ENCODE measurements at regions of chr9 and their contacts with region 1.

Region 1: DNA sequence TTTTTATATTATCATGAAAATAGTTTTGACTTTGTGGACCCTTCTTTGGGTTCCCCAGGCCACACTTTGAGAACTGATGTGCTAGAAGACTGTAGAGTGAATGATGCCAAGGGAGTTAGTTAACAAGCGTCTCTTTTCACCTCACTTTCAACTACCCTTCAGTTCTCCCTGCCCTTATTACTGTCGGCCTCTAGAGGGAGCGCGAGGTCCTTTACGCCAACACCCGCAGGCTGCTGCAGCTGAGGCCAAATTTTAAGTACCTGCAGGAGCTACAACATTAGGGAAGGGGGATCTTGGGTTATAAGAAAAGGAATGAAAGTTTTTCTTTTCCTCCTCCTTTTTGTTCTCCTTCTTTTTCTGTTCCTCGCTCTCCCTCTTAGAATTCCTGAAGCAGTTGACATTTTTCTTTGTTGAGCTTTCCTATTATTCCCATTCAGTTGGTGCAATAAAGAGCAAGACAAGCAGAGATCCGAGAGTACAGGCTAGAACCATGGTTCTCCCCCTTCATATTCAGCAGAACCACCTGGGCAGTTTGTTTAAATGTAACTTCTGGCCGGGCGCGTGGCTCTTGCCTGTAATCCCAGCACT is 84.0 kb downstream of the ZFAND5 start:
- DNase-seq: peak; percentile 73
- H3K4me3 Mint-ChIP-seq: no peak overlapping the region
- H3K27ac Mint-ChIP-seq: no peak overlapping the region
- H3K4me1 Mint-ChIP-seq: no peaks in the 10 kb centered on the region
- H3K27me3 Mint-ChIP-seq: no peaks in the 10 kb centered on the region
- CTCF ChIP-seq: peak; percentile 93

Region 2: DNA sequence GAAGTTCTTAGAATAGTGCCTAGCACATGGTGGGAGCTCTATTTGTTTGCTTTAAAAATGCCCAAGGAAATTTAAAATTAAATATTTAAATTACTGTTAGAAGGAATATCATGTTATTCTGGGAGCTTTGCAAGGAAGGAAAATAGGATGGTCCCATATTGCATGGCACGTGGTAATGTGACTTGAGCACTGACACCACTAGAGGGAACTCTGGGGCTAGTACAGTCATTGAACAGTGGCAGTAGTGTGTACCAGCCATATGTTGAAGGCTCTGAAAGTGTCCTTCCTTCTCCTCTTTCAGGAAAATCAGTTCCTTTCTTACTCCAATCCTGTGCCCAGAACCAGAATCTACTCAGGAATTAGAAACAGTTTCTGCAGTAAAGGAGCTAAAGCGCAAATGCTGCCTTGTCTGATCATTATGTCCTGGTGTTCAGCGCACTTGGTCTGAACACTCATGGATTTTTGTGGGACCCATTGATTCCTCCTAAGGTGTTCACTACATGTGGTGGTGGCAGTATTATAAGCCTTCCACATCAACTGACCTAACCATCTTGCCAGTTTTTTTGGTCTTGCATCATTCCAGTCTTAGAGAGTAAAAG is 77.7 kb before region 1 on chr9:
- CTCF ChIA-PET with region 1: interaction called, 23 read pairs
- POLR2A ChIA-PET with region 1: no interaction called
- intact Hi-C with region 1: no loop called
- DNase-seq: peak; percentile 73
- H3K4me3 Mint-ChIP-seq: no peak overlapping the region
- H3K27ac Mint-ChIP-seq: no peak overlapping the region
- H3K4me1 Mint-ChIP-seq: no peaks in the 10 kb centered on the region
- H3K27me3 Mint-ChIP-seq: peaks cover 20% of the 10 kb centered on the region
- CTCF ChIP-seq: peak; percentile 58

Region 3: GRCh38 chr9:72592502-72593403 is 311.7 kb after region 1 on chr9:
- CTCF ChIA-PET with region 1: interaction called, 61 read pairs
- POLR2A ChIA-PET with region 1: interaction called, 3 read pairs
- intact Hi-C with region 1: loop called (anchors 1 kb)
- DNase-seq: peak; percentile 66
- H3K4me3 Mint-ChIP-seq: no peak overlapping the region
- H3K27ac Mint-ChIP-seq: no peak overlapping the region
- H3K4me1 Mint-ChIP-seq: peaks cover 15% of the 10 kb centered on the region
- H3K27me3 Mint-ChIP-seq: no peaks in the 10 kb centered on the region
- CTCF ChIP-seq: peak; percentile 64

Region 4: DNA sequence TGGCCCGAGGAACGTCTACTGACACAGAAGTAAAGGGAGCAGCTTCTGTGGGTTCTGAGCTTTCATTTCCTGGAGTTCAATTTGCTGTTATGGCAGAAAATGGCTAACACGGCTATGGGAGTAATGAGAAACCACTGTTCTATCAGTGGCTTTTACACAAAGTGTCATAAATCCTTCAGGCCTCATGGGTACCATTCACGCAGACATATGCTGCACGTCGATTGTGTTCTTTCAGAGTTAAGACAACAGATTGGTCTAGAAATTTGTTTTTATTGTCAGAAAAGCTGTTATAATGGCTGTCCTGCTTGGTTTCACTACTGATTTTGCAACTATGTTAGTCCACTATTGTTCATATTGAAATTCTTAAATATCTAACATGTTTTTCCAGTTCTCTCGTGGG is 536.4 kb after region 1 on chr9:
- CTCF ChIA-PET with region 1: interaction called, 240 read pairs
- POLR2A ChIA-PET with region 1: interaction called, 7 read pairs
- intact Hi-C with region 1: loop called (anchors 1 kb)
- DNase-seq: no peak
- H3K4me3 Mint-ChIP-seq: no peak overlapping the region
- H3K27ac Mint-ChIP-seq: no peak overlapping the region
- H3K4me1 Mint-ChIP-seq: no peaks in the 10 kb centered on the region
- H3K27me3 Mint-ChIP-seq: peaks cover 12% of the 10 kb centered on the region
- CTCF ChIP-seq: no peak

Region 5: DNA sequence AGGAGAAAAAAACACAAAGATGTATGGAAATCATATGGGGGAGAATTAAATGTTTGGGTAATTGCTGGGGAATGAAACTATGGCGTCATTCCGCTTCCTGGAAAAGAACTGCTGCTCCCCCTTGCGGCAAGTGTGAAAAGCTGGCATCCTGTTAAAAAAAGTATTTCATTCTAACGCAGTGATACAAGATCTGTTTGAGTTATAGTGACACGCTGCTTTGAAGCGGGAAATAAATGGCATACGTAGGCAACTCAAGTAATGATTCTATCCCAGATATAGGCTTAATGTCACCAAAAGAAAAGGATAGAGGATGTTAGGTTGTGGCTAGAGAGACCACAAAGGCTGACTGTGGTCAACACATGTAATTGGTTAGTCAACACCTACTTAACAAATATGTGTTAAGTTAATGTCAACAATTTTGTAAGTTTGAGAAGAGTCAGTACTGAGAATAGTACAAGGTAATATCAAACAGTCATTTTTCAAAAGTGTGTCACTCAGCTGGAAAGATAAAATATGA is 742.1 kb after region 1 on chr9:
- CTCF ChIA-PET with region 1: interaction called, 5 read pairs
- POLR2A ChIA-PET with region 1: no interaction called
- intact Hi-C with region 1: loop called (anchors 5 kb)
- DNase-seq: peak; percentile 81
- H3K4me3 Mint-ChIP-seq: no peak overlapping the region
- H3K27ac Mint-ChIP-seq: no peak overlapping the region
- H3K4me1 Mint-ChIP-seq: no peaks in the 10 kb centered on the region
- H3K27me3 Mint-ChIP-seq: peaks cover 72% of the 10 kb centered on the region
- CTCF ChIP-seq: peak; percentile 78

Measured in MCF 10A (cell line).